ENCODE measurements at regions of chr16 and their contacts with region 1.

Region 1: DNA sequence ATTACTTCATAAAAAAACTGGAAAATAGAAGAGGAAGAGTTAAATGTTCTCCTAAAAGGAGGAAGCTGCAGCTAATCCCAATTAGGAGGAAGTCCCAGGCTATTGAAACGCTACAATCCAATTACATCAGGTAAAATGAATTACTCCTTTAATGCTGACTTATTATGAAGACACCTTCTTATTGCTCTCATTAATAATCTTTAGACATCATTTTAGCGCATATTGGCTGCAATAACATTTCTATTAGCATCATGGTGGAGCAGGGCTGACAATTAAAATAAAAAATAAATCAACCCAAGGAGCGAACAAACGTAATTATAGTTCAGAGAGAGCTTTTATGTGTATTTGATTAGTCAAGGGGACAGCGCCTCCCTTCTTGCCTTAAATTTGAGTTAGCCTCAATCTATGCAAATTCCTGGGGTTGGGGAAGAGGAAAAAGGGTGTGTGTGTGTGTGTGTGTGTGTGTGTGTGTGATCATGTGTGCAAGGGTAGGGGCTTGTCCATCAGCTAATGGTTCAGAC is 109.0 kb upstream of the IRX6 start:
- DNase-seq: no peak
- ATAC-seq: no peak
- H3K4me3 ChIP-seq: no peak overlapping the region
- H3K27ac ChIP-seq: no peak overlapping the region
- H3K4me1 ChIP-seq: no peaks in the 10 kb centered on the region
- H3K27me3 ChIP-seq: no peaks in the 10 kb centered on the region
- CTCF ChIP-seq: no peak
- POLR2A ChIP-seq: no peak

Region 2: GRCh38 chr16:55021595-55022475 is 193.2 kb before region 1 on chr16:
- intact Hi-C with region 1: no loop called
- DNase-seq: no peak
- ATAC-seq: no peak
- H3K4me3 ChIP-seq: no peak overlapping the region
- H3K27ac ChIP-seq: no peak overlapping the region
- H3K4me1 ChIP-seq: no peaks in the 10 kb centered on the region
- H3K27me3 ChIP-seq: peaks cover 0 to 10% (median 0%) of the 10 kb centered on the region in 9 donors
- CTCF ChIP-seq: peak in 2 of 12 donors; percentile 7 to 28
- POLR2A ChIP-seq: no peak

Region 3: GRCh38 chr16:55146966-55147365 is 68.1 kb before region 1 on chr16:
- intact Hi-C with region 1: loop called in 1 of 10 experiments (anchors 10 kb)
- DNase-seq: no peak
- ATAC-seq: no peak
- H3K4me3 ChIP-seq: no peak overlapping the region
- H3K27ac ChIP-seq: no peak overlapping the region
- H3K4me1 ChIP-seq: no peaks in the 10 kb centered on the region
- H3K27me3 ChIP-seq: no peaks in the 10 kb centered on the region
- CTCF ChIP-seq: no peak
- POLR2A ChIP-seq: no peak

Region 4: GRCh38 chr16:55283812-55284717 is 69.0 kb after region 1 on chr16:
- intact Hi-C with region 1: no loop called
- DNase-seq: no peak
- ATAC-seq: no peak
- H3K4me3 ChIP-seq: no peak overlapping the region
- H3K27ac ChIP-seq: no peak overlapping the region
- H3K4me1 ChIP-seq: no peaks in the 10 kb centered on the region
- H3K27me3 ChIP-seq: peaks cover 0 to 4% (median 0%) of the 10 kb centered on the region in 9 donors
- CTCF ChIP-seq: no peak
- POLR2A ChIP-seq: no peak